Endothelial cell of umbilical vein (primary cell): ENCODE measurements at regions of chr1 and their contacts with region 1.

Region 1: GRCh38 chr1:213987927-213988506 is at the start of gene PROX1:
- DNase-seq: no peak
- H3K4me3 ChIP-seq: peak within 1 kb of the TSS; percentile 45 to 91 (median 79)
- H3K27ac ChIP-seq: peak within 1 kb of the TSS; percentile 65
- H3K4me1 ChIP-seq: peaks cover 16% of the 10 kb centered on the region
- H3K27me3 ChIP-seq: peaks cover 33 to 42% of the 10 kb centered on the region in 2 experiments
- CTCF ChIP-seq: peak in 1 of 2 donors; percentile 0
- POLR2A ChIP-seq: peak; percentile 85
- total RNA-seq, gene PROX1: 3.3 and 4.0 TPM in 2 replicates

Region 2: GRCh38 chr1:213244664-213245091 is 743.3 kb before region 1 on chr1:
- CTCF ChIA-PET with region 1: interaction called, 3 read pairs
- POLR2A ChIA-PET with region 1: no interaction called
- dilution Hi-C with region 1: no loop called
- intact Hi-C with region 1: loop called (anchors 5 kb)
- DNase-seq: peak; percentile 68
- H3K4me3 ChIP-seq: no peak overlapping the region
- H3K27ac ChIP-seq: no peak overlapping the region
- H3K4me1 ChIP-seq: no peaks in the 10 kb centered on the region
- H3K27me3 ChIP-seq: no peaks in the 10 kb centered on the region
- CTCF ChIP-seq: peak; percentile 56 to 57
- POLR2A ChIP-seq: no peak

Region 3: DNA sequence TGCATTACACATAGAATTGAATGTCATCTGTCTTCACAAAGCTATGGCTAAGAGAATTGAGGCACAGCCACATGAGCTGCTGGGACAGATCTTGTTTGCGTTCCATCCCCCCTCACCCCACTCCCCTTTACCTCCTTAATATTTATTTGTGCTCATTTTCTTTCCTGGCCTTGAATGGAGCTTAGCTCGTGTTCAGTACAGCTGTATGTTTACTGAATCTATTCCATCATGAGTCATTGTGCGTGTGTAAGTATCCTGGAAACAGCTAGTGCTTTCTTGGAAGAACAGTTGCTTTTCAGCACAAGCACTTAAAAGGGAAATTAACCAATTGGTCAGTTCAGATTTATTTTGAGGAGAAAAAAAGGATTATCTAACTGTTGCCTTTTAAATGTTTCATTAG is 14.5 kb after region 1 on chr1:
- CTCF ChIA-PET with region 1: interaction called, 7 read pairs
- POLR2A ChIA-PET with region 1: interaction called, 15 read pairs
- dilution Hi-C with region 1: no loop called
- intact Hi-C with region 1: loop called (anchors 1 kb)
- DNase-seq: peak; percentile 95
- H3K4me3 ChIP-seq: no peak overlapping the region
- H3K27ac ChIP-seq: peak overlapping the region; percentile 17
- H3K4me1 ChIP-seq: peaks cover 11% of the 10 kb centered on the region
- H3K27me3 ChIP-seq: no peaks in the 10 kb centered on the region
- CTCF ChIP-seq: no peak
- POLR2A ChIP-seq: no peak

Region 4: GRCh38 chr1:214116258-214116657 is 128.2 kb after region 1 on chr1:
- CTCF ChIA-PET with region 1: interaction called, 3 read pairs
- POLR2A ChIA-PET with region 1: interaction called, 5 read pairs
- dilution Hi-C with region 1: no loop called
- intact Hi-C with region 1: loop called (anchors 1 kb)
- DNase-seq: peak; percentile 82
- H3K4me3 ChIP-seq: no peak overlapping the region
- H3K27ac ChIP-seq: peak overlapping the region; percentile 20
- H3K4me1 ChIP-seq: peaks cover 16% of the 10 kb centered on the region
- H3K27me3 ChIP-seq: no peaks in the 10 kb centered on the region
- CTCF ChIP-seq: no peak
- POLR2A ChIP-seq: no peak